K562 (cell line): ENCODE measurements at regions of chr12 and their contacts with region 1.

Region 1: GRCh38 chr12:104877123-104877705 is 80.9 kb downstream of the SLC41A2 start:
- DNase-seq: peak in 2 of 4 experiments; percentile 28 to 37
- ATAC-seq: peak; percentile 47; the same call in 1 of the 3 replicates
- H3K4me3 ChIP-seq: no peak overlapping the region
- H3K27ac ChIP-seq: no peak overlapping the region
- H3K4me1 ChIP-seq: peaks cover 0 to 5% of the 10 kb centered on the region in 2 experiments; a peak in 1 of 5 replicates
- H3K27me3 ChIP-seq: no peaks in the 10 kb centered on the region
- CTCF ChIP-seq: peak; percentile 47 to 70 (median 50); a peak in 4 of 6 replicates
- EP300 ChIP-seq: no peak
- POLR2A ChIP-seq: no peak
- RAD21 ChIP-seq: peak; percentile 86 to 88

Region 2: GRCh38 chr12:104201238-104202001 is 675.8 kb before region 1 on chr12:
- CTCF ChIA-PET with region 1: no interaction called
- POLR2A ChIA-PET with region 1: no interaction called
- in situ Hi-C with region 1: loop called (anchors 10 kb)
- intact Hi-C with region 1: loop called (anchors 5 kb)
- DNase-seq: peak; percentile 61 to 71 (median 63)
- ATAC-seq: peak; percentile 91
- H3K4me3 ChIP-seq: no peak overlapping the region
- H3K27ac ChIP-seq: no peak overlapping the region
- H3K4me1 ChIP-seq: no peaks in the 10 kb centered on the region
- H3K27me3 ChIP-seq: peaks cover 0 to 8% of the 10 kb centered on the region in 2 experiments; a peak in 2 of 5 replicates
- CTCF ChIP-seq: peak; percentile 76 to 90 (median 88)
- EP300 ChIP-seq: no peak
- POLR2A ChIP-seq: no peak
- RAD21 ChIP-seq: peak; percentile 90 to 93

Region 3: GRCh38 chr12:104680066-104680465 is 197.1 kb before region 1 on chr12:
- CTCF ChIA-PET with region 1: no interaction called
- POLR2A ChIA-PET with region 1: no interaction called
- in situ Hi-C with region 1: no loop called
- intact Hi-C with region 1: loop called (anchors 1 kb)
- DNase-seq: peak in 1 of 4 experiments; percentile 20
- ATAC-seq: peak; percentile 65; the same call in 2 of the 3 replicates
- H3K4me3 ChIP-seq: no peak overlapping the region
- H3K27ac ChIP-seq: no peak overlapping the region
- H3K4me1 ChIP-seq: no peaks in the 10 kb centered on the region; a peak in 1 of 5 replicates
- H3K27me3 ChIP-seq: no peaks in the 10 kb centered on the region
- CTCF ChIP-seq: peak; percentile 1 to 40 (median 24); a peak in 2 of 6 replicates
- EP300 ChIP-seq: no peak
- POLR2A ChIP-seq: no peak
- RAD21 ChIP-seq: peak in 1 of 2 experiments; percentile 30; a peak in 1 of 4 replicates